ENCODE measurements at regions of chr7 and their contacts with region 1.

Region 1: DNA sequence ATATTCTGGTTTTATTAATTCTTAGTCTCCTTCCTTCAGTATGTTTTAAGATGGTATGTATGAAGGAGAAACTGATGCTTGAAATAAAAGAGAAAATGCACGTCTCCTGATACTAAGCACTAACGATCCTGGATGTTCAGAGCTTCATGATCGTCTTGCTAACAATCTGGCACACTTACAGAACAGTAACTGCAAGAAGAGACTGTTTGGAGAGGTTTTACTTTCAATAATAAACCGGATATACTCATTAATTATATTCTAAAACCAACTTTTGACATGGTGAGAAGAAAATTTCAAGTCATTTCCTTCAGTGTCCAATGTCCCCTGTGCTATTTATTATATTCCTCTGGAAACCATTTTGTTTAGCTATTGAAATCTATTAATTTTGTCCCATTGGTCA is 251.0 kb downstream of the NXPH1 start:
- DNase-seq: no peak
- H3K4me3 ChIP-seq: no peak overlapping the region
- H3K27ac ChIP-seq: no peak overlapping the region
- H3K4me1 ChIP-seq: no peaks in the 10 kb centered on the region
- H3K27me3 ChIP-seq: no peaks in the 10 kb centered on the region
- CTCF ChIP-seq: no peak
- POLR2A ChIP-seq: no peak

Region 2: GRCh38 chr7:8627325-8627724 is 57.1 kb before region 1 on chr7:
- intact Hi-C with region 1: loop called (anchors 2 kb)
- DNase-seq: no peak
- H3K4me3 ChIP-seq: no peak overlapping the region
- H3K27ac ChIP-seq: no peak overlapping the region
- H3K4me1 ChIP-seq: no peaks in the 10 kb centered on the region
- H3K27me3 ChIP-seq: no peaks in the 10 kb centered on the region
- CTCF ChIP-seq: no peak
- POLR2A ChIP-seq: no peak